ENCODE measurements at regions of chr10 and their contacts with region 1.

Region 1: DNA sequence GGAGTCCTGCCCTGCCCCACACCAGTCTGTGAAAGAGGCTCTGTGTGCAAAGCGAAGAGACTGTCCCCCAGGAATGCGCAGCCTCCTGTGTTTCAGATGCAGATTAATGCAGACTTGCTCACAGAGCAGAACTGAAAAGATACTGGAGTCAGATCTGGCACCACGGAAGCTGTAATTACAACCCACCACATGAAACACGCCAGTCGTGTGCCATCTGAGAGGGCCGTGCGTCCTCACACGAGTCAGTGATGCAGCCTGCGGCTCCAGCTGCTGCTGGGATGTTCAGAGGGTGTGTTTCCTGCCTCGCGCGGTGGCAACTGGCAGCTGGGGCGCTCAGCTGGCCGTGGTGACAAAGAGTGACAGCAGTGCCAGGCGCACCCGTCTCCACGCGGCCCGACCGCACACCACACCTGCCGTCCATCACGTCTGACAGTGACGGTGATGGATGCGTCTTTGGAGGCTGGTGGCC is 50.0 kb downstream of the NKX6-2 start:
- DNase-seq: no peak
- ATAC-seq: no peak

Region 2: DNA sequence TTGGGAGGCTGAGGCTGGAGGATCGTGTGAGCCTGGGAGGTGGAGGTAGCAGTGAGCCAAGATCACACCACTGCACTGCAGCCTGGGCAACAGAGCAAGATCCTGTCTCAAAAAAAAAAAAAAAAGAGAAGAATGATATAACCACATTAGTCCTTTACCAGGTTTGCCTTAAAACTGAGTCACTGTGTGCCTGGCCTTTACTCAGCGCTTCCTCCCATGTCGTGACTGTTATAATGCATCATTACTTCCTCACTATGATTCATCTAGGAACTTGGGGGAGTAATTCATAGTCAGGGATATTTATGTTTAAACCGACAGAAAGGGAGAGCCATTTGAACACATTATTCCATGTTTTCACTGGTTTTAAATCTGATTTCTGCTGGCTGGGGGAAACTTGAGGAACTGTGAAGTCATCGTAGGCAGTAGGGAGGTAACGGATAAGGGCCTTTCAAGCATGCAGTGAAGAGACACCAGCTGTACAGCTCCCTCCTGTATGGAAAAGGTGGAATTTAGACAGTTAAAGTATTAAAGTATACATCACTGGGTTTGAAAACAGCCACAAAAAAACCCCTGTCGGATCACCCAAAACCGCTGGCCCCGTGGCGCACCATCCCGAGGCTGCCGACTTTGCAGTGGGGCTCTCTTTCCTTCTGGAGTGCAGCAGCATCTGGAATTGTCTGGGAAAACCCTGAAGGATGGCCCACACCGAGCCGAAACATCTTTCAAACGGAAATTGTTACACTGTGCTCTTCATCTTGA is 69.8 kb before region 1 on chr10:
- intact Hi-C with region 1: loop called (anchors 10 kb)
- DNase-seq: peak; percentile 6
- ATAC-seq: no peak